ENCODE measurements at regions of chr15 and their contacts with region 1.

Region 1: GRCh38 chr15:44536962-44537734 is at the start of gene EIF3J:
- DNase-seq: peak; percentile 69
- ATAC-seq: peak; percentile 94
- H3K4me3 ChIP-seq: peak within 1 kb of the TSS; percentile 76 to 89
- H3K27ac ChIP-seq: peak within 1 kb of the TSS; percentile 91
- H3K4me1 ChIP-seq: peaks cover 15% of the 10 kb centered on the region; the same call in 1 of the 2 replicates
- H3K27me3 ChIP-seq: no peaks in the 10 kb centered on the region
- CTCF ChIP-seq: no peak
- total RNA-seq, gene EIF3J: 128 TPM

Region 2: GRCh38 chr15:44286814-44287452 is 250.2 kb before region 1 on chr15:
- CTCF ChIA-PET with region 1: no interaction called
- POLR2A ChIA-PET with region 1: interaction called, 11 read pairs
- in situ Hi-C with region 1: no loop called
- intact Hi-C with region 1: no loop called
- DNase-seq: no peak
- ATAC-seq: no peak
- H3K4me3 ChIP-seq: peak overlapping the region; percentile 80 to 91; a peak in 3 of 4 replicates
- H3K27ac ChIP-seq: peak overlapping the region; percentile 94; the same call in 1 of the 2 replicates
- H3K4me1 ChIP-seq: peaks cover 20% of the 10 kb centered on the region; the same call in 1 of the 2 replicates
- H3K27me3 ChIP-seq: no peaks in the 10 kb centered on the region
- CTCF ChIP-seq: no peak

Region 3: DNA sequence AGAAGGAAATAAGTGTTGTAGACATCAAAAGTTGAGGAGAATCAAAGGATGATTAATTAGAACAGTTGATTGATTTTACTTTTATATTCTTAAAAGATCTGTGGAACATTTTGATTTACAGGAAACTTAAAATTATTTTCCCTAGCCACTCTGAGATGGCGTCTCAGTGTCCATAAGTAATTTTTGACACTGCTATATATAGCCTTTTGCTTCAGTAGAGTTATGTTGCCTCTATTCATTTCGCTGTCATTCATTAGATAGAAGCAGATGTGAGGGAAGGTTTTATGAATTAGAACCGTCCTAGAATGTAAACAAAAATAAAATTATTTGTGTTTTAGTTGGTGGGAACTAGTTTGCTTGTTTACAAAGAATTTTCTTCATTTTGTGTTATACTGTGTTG is 51.3 kb before region 1 on chr15:
- CTCF ChIA-PET with region 1: no interaction called
- POLR2A ChIA-PET with region 1: no interaction called
- in situ Hi-C with region 1: no loop called
- intact Hi-C with region 1: no loop called
- DNase-seq: no peak
- ATAC-seq: no peak
- H3K4me3 ChIP-seq: no peak overlapping the region
- H3K27ac ChIP-seq: no peak overlapping the region
- H3K4me1 ChIP-seq: peaks cover 7% of the 10 kb centered on the region
- H3K27me3 ChIP-seq: no peaks in the 10 kb centered on the region
- CTCF ChIP-seq: no peak

Region 4: DNA sequence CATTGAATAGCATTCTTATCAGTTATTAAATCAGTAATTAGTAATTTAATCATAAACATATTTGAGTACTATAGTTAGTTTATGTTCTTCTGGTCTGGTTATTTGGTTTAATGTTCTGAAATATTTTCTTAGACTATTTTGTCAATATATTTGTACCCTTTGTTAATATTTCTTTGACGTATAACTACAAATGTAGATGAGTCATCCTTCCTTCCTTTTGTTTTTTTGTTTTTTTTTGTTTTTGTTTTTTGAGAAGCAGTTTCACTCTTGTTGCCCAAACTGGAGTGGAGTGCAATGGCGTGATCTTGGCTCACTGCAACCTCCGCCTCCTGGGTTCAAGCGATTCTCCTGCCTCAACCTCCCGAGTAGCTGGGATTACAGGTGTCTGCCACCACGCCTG is 17.6 kb before region 1 on chr15:
- CTCF ChIA-PET with region 1: interaction called, 6 read pairs
- POLR2A ChIA-PET with region 1: interaction called, 14 read pairs
- in situ Hi-C with region 1: no loop called
- intact Hi-C with region 1: no loop called
- DNase-seq: no peak
- ATAC-seq: no peak
- H3K4me3 ChIP-seq: no peak overlapping the region
- H3K27ac ChIP-seq: no peak overlapping the region
- H3K4me1 ChIP-seq: no peaks in the 10 kb centered on the region
- H3K27me3 ChIP-seq: no peaks in the 10 kb centered on the region
- CTCF ChIP-seq: no peak

Region 5: GRCh38 chr15:44584162-44584749 is 47.1 kb after region 1 on chr15:
- CTCF ChIA-PET with region 1: no interaction called
- POLR2A ChIA-PET with region 1: no interaction called
- in situ Hi-C with region 1: no loop called
- intact Hi-C with region 1: no loop called
- DNase-seq: peak; percentile 36
- ATAC-seq: peak; percentile 95
- H3K4me3 ChIP-seq: no peak overlapping the region
- H3K27ac ChIP-seq: no peak overlapping the region
- H3K4me1 ChIP-seq: no peaks in the 10 kb centered on the region
- H3K27me3 ChIP-seq: no peaks in the 10 kb centered on the region
- CTCF ChIP-seq: peak; percentile 86

Region 6: GRCh38 chr15:44873103-44873502 is 336.0 kb after region 1 on chr15:
- CTCF ChIA-PET with region 1: no interaction called
- POLR2A ChIA-PET with region 1: interaction called, 12 read pairs
- in situ Hi-C with region 1: no loop called
- intact Hi-C with region 1: no loop called
- DNase-seq: no peak
- ATAC-seq: no peak
- H3K4me3 ChIP-seq: no peak overlapping the region
- H3K27ac ChIP-seq: no peak overlapping the region
- H3K4me1 ChIP-seq: no peaks in the 10 kb centered on the region
- H3K27me3 ChIP-seq: no peaks in the 10 kb centered on the region
- CTCF ChIP-seq: no peak

Measured in Panc1 (cell line).